HepG2 (cell line): ENCODE measurements at regions of chr14 and their contacts with region 1.

Region 1: DNA sequence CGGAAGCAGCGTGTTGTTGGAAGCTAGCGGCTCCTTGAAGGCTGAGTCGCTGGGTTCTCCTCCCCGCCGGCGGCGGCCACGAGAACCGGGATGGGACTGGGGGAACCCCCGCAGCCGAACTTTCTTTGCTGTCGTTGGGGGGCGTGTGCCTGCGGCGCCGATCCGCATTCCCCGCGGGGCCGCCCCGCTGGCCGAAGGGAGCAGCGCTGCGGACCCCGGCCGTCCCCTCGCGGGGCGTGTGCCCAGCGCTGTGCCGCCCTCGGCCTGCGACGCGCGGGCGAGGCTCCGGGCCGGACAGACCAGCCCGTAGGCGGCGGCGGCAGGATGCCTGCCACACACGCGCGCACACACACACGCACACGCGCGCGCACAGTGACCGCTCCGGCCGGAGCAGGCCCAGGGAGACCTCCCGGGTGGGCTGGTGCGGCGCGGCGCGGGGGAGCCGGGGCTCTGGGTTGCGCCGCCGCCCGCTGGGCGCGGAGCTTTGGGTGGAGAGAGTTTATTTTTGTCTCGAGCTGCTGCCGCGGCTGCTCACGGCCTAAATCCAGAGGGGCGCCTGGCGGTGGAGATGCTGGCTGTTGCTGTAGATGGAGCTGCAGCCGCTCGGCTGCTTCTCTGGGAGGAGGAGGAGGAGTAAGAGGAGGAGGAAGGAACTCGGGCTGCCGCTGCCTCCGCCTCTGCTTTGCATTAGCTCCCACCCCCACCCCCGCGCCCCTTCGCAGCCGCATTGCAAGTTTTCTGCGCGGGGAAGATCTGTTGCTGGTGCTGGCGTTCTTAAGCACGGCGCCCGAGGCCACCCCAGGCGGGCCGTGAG is at the start of gene SAMD4A:
- DNase-seq: peak; percentile 48
- ATAC-seq: peak; percentile 19
- H3K4me3 ChIP-seq: peak within 1 kb of the TSS; percentile 73 to 93 (median 89)
- H3K27ac ChIP-seq: peak within 1 kb of the TSS; percentile 97
- H3K4me1 ChIP-seq: peaks cover 35% of the 10 kb centered on the region
- H3K27me3 ChIP-seq: no peaks in the 10 kb centered on the region
- CTCF ChIP-seq: no peak; the same call in none of the 2 replicates
- EP300 ChIP-seq: no peak
- POLR2A ChIP-seq: no peak; a peak in 1 of 4 replicates
- RAD21 ChIP-seq: no peak
- total RNA-seq, gene SAMD4A: 6.9 and 13.0 TPM in 2 replicates

Region 2: GRCh38 chr14:54642801-54643697 is 76.4 kb after region 1 on chr14:
- CTCF ChIA-PET with region 1: interaction called, 3 read pairs
- POLR2A ChIA-PET with region 1: interaction called, 22 read pairs
- in situ Hi-C with region 1: no loop called
- intact Hi-C with region 1: no loop called
- DNase-seq: peak; percentile 93
- ATAC-seq: peak; percentile 85
- H3K4me3 ChIP-seq: peak overlapping the region in 2 of 3 experiments; percentile 17 to 50; a peak in 4 of 6 replicates
- H3K27ac ChIP-seq: peak overlapping the region; percentile 83
- H3K4me1 ChIP-seq: peaks cover 94% of the 10 kb centered on the region
- H3K27me3 ChIP-seq: no peaks in the 10 kb centered on the region
- CTCF ChIP-seq: peak; percentile 53
- EP300 ChIP-seq: peak in 1 of 2 experiments; percentile 67; a peak in 2 of 4 replicates
- POLR2A ChIP-seq: no peak
- RAD21 ChIP-seq: no peak

Region 3: DNA sequence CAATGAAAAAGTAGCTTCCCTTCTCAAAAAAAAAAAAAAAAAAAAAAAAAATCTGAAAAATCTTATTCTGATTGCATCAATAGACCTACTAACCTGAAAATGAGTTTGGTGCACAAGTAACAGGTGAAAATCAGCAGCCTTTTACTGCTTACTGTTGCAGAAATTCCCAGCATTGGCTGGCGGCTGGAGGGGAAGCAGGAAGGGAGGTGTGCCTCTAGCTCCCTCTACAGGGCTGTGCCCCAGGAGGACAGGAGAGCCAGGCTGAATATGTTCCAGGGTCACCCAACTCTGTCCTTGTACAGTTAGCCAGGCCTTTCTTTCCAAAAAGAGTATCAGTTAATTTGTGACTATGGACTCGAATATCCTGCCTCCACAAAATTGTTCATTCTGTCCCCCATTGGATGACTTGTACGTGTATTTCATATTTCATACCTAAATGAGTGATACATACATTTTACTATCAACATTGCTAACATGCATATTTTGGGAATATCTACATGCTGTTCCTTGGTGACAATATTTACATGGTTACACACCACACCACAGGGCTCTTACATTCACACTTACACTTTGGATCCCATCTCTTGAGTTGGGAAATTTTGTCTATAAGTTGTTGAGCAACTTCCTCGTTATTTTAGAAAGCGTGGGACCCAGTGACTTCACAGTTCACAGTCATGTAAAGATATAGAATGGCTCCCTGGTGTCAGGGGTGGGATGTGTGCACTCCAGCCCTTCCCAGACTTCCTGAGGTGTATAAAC is 125.1 kb after region 1 on chr14:
- CTCF ChIA-PET with region 1: interaction called, 21 read pairs
- POLR2A ChIA-PET with region 1: interaction called, 13 read pairs
- in situ Hi-C with region 1: loop called (anchors 5 kb)
- intact Hi-C with region 1: loop called (anchors 1 kb)
- DNase-seq: peak; percentile 70
- ATAC-seq: peak; percentile 96
- H3K4me3 ChIP-seq: no peak overlapping the region
- H3K27ac ChIP-seq: no peak overlapping the region
- H3K4me1 ChIP-seq: peaks cover 18% of the 10 kb centered on the region; the same call in 1 of the 2 replicates
- H3K27me3 ChIP-seq: no peaks in the 10 kb centered on the region; a peak in 1 of 5 replicates
- CTCF ChIP-seq: peak; percentile 90
- EP300 ChIP-seq: no peak
- POLR2A ChIP-seq: no peak
- RAD21 ChIP-seq: peak; percentile 90

Region 4: GRCh38 chr14:54805521-54806322 is 239.1 kb after region 1 on chr14:
- CTCF ChIA-PET with region 1: interaction called, 11 read pairs
- POLR2A ChIA-PET with region 1: interaction called, 5 read pairs
- in situ Hi-C with region 1: loop called (anchors 10 kb)
- intact Hi-C with region 1: loop called (anchors 10 kb)
- DNase-seq: peak; percentile 62
- ATAC-seq: peak; percentile 81
- H3K4me3 ChIP-seq: peak overlapping the region in 1 of 3 experiments; percentile 55; a peak in 3 of 6 replicates
- H3K27ac ChIP-seq: no peak overlapping the region
- H3K4me1 ChIP-seq: peaks cover 55% of the 10 kb centered on the region
- H3K27me3 ChIP-seq: no peaks in the 10 kb centered on the region
- CTCF ChIP-seq: peak; percentile 93
- EP300 ChIP-seq: no peak
- POLR2A ChIP-seq: no peak
- RAD21 ChIP-seq: peak; percentile 72